Caco-2 (cell line): ENCODE measurements at regions of chr5 and their contacts with region 1.

Region 1: DNA sequence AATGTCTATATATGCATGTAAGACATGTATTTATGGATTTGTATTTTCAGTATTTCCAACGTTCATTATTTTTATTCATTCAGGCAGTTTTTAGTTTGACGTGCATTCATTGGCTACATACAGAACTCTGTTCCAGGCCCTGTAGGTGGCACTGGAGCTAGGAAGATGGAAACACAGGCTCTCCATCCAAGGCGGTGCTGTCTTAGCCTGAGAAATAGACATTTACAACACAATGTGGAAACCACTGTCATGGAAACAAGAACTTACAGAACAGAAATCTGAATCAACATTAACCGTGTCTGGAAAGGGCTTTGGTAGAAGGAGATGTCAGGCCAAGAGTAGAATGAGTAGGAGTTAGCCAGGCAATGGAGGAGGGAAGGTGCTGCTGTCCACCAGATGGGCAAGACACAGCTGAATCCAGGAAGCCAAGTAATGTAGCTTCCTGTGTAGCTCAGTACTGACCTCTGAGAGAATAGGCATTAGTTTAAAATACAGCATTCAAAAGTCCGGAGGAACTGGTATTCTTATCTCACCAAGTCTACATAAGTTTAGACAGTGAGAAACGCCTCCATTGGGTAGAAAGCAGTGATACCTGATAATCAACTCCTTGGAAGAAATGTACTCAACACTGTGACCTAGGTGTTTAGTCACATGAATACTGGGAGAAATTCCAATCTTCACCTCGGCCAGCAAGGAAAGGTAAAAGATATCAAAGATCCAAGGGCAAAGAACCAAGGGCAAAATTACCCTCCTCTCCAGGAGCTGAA is 388.6 kb upstream of the CDH6 start:
- DNase-seq: no peak
- H3K4me3 ChIP-seq: no peak overlapping the region
- H3K4me3 Mint-ChIP-seq: no peak overlapping the region
- H3K27ac Mint-ChIP-seq: no peak overlapping the region
- H3K4me1 ChIP-seq: no peaks in the 10 kb centered on the region
- H3K4me1 Mint-ChIP-seq: peaks cover 6% of the 10 kb centered on the region
- H3K27me3 ChIP-seq: no peaks in the 10 kb centered on the region
- H3K27me3 Mint-ChIP-seq: peaks cover 6% of the 10 kb centered on the region
- CTCF ChIP-seq: peak in 1 of 2 experiments; percentile 29

Region 2: DNA sequence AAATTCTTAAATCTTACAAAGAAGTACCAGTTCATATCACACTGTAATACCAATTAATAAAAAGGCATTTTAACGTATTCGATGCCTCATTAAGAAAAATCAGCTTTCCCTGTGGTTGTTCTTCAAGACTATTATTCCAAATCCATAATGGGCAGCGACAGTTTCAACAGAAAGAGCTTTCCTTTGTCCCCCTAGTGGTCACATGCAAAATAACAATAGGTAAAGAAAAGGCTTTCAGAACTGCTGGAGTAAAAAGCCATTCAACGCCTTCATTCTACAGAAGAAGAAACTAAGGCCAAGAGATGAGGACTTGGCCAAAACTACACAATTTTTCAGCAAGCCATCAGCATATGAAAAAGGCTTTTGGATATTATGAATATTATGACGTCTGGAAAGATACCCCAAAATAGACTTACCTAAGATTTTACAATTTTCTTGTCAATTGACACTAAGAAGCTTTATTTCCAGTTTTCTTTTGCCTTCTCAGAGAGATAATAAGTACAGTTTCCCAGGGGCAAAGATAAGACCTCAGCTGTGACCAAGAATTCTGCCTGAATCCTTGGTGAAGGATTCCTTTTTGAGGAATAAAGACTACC is 381.8 kb after region 1 on chr5:
- CTCF ChIA-PET with region 1: no interaction called
- POLR2A ChIA-PET with region 1: no interaction called
- intact Hi-C with region 1: loop called (anchors 2 kb)
- DNase-seq: peak in 1 of 2 experiments; percentile 51
- H3K4me3 ChIP-seq: no peak overlapping the region
- H3K4me3 Mint-ChIP-seq: no peak overlapping the region
- H3K27ac Mint-ChIP-seq: no peak overlapping the region
- H3K4me1 ChIP-seq: no peaks in the 10 kb centered on the region
- H3K4me1 Mint-ChIP-seq: peaks cover 6% of the 10 kb centered on the region
- H3K27me3 ChIP-seq: no peaks in the 10 kb centered on the region
- H3K27me3 Mint-ChIP-seq: no peaks in the 10 kb centered on the region
- CTCF ChIP-seq: peak; percentile 72 to 80